Calu3 (cell line): ENCODE measurements at regions of chr11 and their contacts with region 1.

Region 1: DNA sequence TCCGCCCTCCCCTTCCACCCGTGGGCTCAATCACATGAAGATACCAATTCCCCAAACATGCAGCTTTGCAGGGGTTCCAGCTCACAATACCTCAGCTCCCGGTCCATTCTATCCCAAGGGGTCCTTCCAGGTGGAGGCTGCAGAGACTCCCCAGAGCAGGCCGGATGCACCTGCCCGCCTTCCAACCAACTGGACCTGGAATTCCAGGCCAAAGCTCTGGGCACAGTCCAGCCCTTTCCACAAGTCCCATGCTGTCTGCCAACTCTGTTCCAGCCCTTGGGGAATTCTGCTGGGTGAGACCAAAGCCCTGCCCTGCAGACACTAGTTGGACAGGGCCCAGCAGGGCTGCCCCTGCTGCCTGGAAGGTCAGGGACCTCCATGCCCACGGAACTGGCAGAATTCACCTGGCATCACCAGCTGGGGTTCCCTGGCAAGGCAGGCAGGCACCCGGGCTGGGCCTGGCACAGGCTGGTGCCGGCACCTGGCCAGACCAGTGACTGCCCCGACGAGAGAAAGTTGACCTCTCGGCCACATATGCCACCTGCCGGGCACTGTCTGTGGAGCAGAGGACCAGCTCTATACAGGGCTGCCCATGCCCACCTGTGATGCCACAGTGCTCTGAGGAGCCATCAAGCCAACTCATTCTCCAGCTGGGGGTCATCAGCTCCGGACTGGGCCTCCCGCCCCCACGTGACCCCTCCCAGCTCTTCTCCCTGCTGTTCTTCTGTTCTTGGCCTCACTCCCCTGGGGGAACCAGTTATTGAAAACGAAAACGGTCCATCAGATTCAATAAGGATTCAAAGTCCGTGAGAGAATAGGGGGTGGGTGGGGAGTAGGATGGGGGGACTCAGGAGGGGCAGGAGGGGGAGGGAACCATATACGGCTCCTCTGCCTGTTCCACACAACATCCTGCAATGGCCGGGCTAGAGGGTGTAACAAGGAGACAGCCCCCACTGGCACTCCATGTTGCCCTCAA is 4.7 kb downstream of the SYT7 start:
- DNase-seq: no peak
- H3K4me3 Mint-ChIP-seq: no peak overlapping the region
- H3K27ac Mint-ChIP-seq: no peak overlapping the region
- H3K4me1 Mint-ChIP-seq: no peaks in the 10 kb centered on the region
- H3K27me3 Mint-ChIP-seq: peaks cover 75% of the 10 kb centered on the region
- CTCF ChIP-seq: no peak

Region 2: GRCh38 chr11:61546663-61547062 is 29.5 kb before region 1 on chr11:
- CTCF ChIA-PET with region 1: interaction called, 10 read pairs
- intact Hi-C with region 1: no loop called
- DNase-seq: no peak
- H3K4me3 Mint-ChIP-seq: no peak overlapping the region
- H3K27ac Mint-ChIP-seq: no peak overlapping the region
- H3K4me1 Mint-ChIP-seq: peaks cover 11% of the 10 kb centered on the region
- H3K27me3 Mint-ChIP-seq: peaks cover 54% of the 10 kb centered on the region
- CTCF ChIP-seq: no peak